Left lung (tissue), 14 donors: ENCODE measurements at regions of chr3 and their contacts with region 1.

Region 1: DNA sequence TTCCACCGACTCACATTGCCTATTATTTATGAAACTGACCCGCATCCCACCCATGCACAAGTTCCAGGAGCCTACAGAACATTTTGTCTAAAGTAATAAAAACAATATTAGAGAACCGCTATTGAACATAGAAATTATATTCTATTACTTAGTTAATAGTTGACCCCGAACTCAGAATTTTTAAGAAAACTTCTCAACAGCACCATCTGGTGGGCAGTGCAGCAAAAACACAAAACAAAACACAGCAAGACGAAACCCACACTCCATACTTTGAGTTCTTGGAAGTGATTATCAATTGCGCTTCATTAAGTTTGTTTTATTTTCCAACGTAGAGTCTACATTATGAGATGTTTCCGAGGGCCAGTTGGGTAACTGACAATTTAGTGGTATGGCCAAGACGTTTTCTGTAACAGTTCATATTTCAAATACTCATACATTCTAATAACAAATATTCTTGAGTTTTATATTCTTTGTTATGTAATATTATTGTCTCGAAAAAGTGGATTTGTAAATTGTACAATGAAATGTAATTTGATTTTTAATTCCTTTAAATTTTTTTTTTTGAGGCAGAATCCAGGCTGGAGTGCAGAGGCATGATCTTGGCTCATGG is 24.0 kb upstream of the C3orf70 start:
- DNase-seq: peak in 2 of 4 donors; percentile 37 to 54
- ATAC-seq: peak; percentile 69
- H3K4me3 ChIP-seq: no peak overlapping the region
- H3K27ac ChIP-seq: no peak overlapping the region
- H3K4me1 ChIP-seq: peaks cover 5 to 16% of the 10 kb centered on the region in 2 donors
- H3K27me3 ChIP-seq: no peaks in the 10 kb centered on the region
- CTCF ChIP-seq: peak; percentile 59 to 63

Region 2: GRCh38 chr3:184874709-184875644 is 301.9 kb before region 1 on chr3:
- intact Hi-C with region 1: loop called in 1 of 2 experiments (anchors 5 kb)
- DNase-seq: peak in 2 of 4 donors; percentile 15 to 36
- ATAC-seq: peak; percentile 65
- H3K4me3 ChIP-seq: no peak overlapping the region
- H3K27ac ChIP-seq: no peak overlapping the region
- H3K4me1 ChIP-seq: no peaks in the 10 kb centered on the region
- H3K27me3 ChIP-seq: no peaks in the 10 kb centered on the region
- CTCF ChIP-seq: peak in 1 of 2 donors; percentile 46